ENCODE measurements at regions of chr12 and their contacts with region 1.

Region 1: DNA sequence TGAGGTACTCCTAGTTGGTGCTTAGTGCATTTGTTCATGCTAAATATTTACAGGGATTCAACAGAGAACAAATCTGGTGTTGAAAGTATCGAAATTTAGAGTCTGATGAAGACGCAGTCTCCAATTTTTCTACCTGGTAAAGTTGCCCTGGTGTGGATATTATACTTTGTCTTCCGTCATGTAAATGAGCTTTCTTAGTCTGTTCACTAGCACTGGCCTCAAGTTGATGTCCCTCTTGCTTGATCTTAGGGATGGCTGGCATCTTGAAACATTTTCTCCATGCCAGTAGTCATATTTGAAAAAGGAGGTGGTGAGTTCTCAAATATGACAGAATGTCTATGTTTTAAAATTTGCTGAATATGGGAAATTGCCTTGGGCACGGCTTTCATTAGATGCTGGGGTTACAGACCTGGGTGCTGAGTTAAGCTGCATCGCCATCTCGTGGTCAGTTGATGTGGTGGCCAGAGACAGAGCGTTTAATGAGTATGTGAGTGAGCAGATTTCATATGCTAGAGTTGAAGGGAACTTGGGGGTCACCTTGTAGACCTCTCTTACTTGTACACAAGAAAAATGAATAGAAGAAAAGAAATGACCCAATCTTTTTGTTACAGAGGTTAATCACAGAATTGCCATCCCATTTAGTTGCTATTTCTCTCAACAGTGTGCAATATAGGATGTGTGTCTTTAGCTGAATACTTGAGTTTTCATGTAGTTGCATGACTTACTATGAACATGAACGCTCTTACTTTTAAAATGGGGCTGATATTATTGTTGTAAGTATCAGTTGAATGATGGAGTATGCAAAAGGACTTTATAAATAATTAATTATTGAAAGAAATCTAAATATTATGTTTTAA is 172.8 kb upstream of the DCN start:
- DNase-seq: peak in 2 of 3 donors; percentile 64 to 83
- ATAC-seq: peak; percentile 83
- H3K4me3 ChIP-seq: no peak overlapping the region
- H3K4me1 ChIP-seq: peaks cover 13% of the 10 kb centered on the region
- CTCF ChIP-seq: peak; percentile 71

Region 2: GRCh38 chr12:90978117-90978770 is 377.1 kb before region 1 on chr12:
- intact Hi-C with region 1: loop called (anchors 10 kb)
- DNase-seq: no peak
- ATAC-seq: peak; percentile 52
- H3K4me3 ChIP-seq: no peak overlapping the region
- H3K4me1 ChIP-seq: no peaks in the 10 kb centered on the region
- CTCF ChIP-seq: no peak

Region 3: GRCh38 chr12:91603060-91603459 is 247.7 kb after region 1 on chr12:
- intact Hi-C with region 1: no loop called
- DNase-seq: no peak
- ATAC-seq: no peak
- H3K4me3 ChIP-seq: no peak overlapping the region
- H3K4me1 ChIP-seq: no peaks in the 10 kb centered on the region
- CTCF ChIP-seq: no peak

Measured in mucosa of descending colon (tissue), 3 donors.